Breast epithelium (tissue), 4 donors: ENCODE measurements at regions of chrX and their contacts with region 1.

Region 1: DNA sequence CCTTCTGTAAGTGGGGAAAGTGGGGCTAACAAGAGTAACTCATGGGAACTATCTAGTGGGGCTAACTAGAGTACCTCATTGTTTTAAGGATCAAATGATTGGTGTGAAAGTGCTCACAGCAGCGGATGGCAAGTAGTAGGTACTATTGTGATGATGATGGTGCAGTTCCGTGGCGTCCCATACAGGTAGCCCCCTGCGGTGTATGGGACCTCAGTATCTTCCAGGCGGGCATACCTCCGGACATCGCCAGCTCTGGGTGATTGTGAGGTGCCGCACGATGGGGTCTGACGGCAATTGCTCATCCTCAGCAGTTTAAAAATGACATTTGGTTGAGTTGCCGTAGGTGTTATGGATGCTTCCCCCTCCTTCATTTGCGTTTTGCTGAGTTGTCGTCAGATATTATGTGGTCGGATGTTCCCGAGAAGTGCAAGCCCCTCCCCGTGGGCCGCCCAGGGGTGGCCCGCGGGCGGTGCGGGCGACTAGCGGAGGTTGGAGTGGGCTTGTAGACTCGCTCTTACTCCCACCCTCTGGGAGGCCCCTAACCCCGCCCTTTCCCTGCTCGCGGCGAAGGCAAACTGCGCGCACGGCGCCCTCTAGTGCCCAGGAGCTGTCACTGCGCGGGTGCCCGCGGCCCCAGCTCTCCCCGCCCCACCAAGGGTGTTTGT is 18.3 kb upstream of the GPR101 start:
- DNase-seq: no peak
- H3K4me3 ChIP-seq: peak overlapping the region; percentile 28 to 60 (median 47)
- H3K27ac ChIP-seq: no peak overlapping the region
- H3K4me1 ChIP-seq: no peaks in the 10 kb centered on the region
- H3K27me3 ChIP-seq: peaks cover 0 to 64% of the 10 kb centered on the region in 2 donors
- CTCF ChIP-seq: peak in 2 of 3 donors; percentile 47 to 52
- POLR2A ChIP-seq: no peak

Region 2: GRCh38 chrX:136806891-136807410 is 245.2 kb before region 1 on chrX:
- intact Hi-C with region 1: loop called (anchors 5 kb)
- DNase-seq: no peak
- H3K4me3 ChIP-seq: no peak overlapping the region
- H3K27ac ChIP-seq: no peak overlapping the region
- H3K4me1 ChIP-seq: no peaks in the 10 kb centered on the region
- H3K27me3 ChIP-seq: peaks cover 0 to 7% of the 10 kb centered on the region in 2 donors
- CTCF ChIP-seq: no peak
- POLR2A ChIP-seq: no peak